ENCODE measurements at regions of chr20 and their contacts with region 1.

Region 1: DNA sequence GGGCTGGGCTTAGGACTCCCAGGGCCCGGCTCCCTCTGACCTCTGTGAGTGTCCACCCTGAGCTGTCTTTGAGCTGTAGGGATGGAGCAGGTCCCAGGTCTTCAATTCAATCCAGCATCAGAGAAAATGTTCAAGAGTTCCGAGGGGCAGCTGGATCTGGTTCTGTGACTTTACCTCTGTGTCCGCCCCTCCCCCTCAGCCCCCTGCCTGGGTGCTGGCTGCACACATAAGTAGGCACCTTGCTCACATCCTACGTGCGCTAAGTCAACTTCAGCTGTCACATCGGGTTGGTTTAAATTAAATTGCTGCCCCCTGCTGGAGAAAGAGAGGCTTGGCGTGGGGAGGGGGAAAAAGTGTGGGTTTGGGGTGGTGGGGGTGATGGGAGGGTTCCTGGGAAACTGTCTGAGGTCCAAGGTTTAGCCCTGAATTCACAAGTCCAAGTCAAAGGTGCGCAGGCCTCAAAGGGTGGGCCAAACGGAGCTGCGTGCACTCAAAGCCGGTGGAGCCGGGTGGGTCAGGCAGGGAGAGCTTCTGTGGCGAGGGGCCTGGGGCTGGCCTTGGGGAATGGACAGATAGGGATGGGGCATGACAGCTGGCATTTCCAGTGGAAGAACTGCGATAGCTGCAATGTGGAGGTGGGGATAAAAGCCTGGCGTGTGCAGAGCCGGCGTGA is 3.0 kb downstream of the WFDC5 start:
- DNase-seq: peak; percentile 37
- H3K4me3 Mint-ChIP-seq: no peak overlapping the region
- H3K27ac Mint-ChIP-seq: no peak overlapping the region
- H3K4me1 Mint-ChIP-seq: peaks cover 9% of the 10 kb centered on the region
- H3K27me3 Mint-ChIP-seq: no peaks in the 10 kb centered on the region

Region 2: GRCh38 chr20:45011108-45011526 is 100.8 kb before region 1 on chr20:
- CTCF ChIA-PET with region 1: interaction called, 25 read pairs
- POLR2A ChIA-PET with region 1: no interaction called
- intact Hi-C with region 1: no loop called
- DNase-seq: peak; percentile 55
- H3K4me3 Mint-ChIP-seq: no peak overlapping the region
- H3K27ac Mint-ChIP-seq: no peak overlapping the region
- H3K4me1 Mint-ChIP-seq: peaks cover 62% of the 10 kb centered on the region
- H3K27me3 Mint-ChIP-seq: no peaks in the 10 kb centered on the region

Region 3: DNA sequence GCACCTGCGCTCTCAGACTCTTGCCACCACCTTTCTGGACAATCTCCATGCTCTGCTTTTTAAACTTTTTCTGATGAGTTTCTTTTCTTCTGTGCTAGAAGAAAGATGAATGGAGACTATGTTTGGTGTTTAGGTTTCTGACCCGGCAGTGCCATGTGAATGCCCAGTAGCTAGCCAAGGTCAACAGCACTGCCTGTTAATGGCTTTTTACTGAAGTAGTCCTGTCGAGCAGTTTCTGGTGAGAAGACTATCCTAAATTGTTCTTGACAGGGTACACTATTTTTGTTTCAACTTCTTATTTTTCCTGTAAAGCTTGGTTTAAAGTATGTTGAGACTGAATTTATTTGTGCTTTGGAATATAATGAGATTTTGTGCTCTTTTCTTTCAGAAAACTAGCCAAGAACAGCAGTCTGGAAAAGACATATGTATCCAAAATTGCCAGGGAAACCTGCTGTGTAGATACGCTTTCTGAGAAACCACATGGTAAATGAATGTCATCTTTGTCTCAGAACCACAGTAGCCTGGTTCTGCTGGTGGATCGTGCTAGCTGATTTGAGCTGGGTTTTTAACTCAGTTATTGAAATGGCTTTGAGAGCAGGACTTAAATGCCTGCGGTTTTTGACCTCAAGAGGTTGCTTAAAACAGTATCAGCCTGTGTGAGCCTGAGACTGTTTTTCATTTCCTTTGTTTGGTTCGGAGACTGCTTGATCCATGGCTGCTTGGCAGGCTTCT is 59.1 kb before region 1 on chr20:
- CTCF ChIA-PET with region 1: interaction called, 15 read pairs
- POLR2A ChIA-PET with region 1: no interaction called
- intact Hi-C with region 1: no loop called
- DNase-seq: peak; percentile 41
- H3K4me3 Mint-ChIP-seq: no peak overlapping the region
- H3K27ac Mint-ChIP-seq: peak overlapping the region; percentile 74
- H3K4me1 Mint-ChIP-seq: peaks cover 77% of the 10 kb centered on the region
- H3K27me3 Mint-ChIP-seq: no peaks in the 10 kb centered on the region

Region 4: GRCh38 chr20:45138561-45139300 is 26.8 kb after region 1 on chr20:
- CTCF ChIA-PET with region 1: interaction called, 22 read pairs
- POLR2A ChIA-PET with region 1: no interaction called
- intact Hi-C with region 1: no loop called
- DNase-seq: peak; percentile 88
- H3K4me3 Mint-ChIP-seq: no peak overlapping the region
- H3K27ac Mint-ChIP-seq: no peak overlapping the region
- H3K4me1 Mint-ChIP-seq: no peaks in the 10 kb centered on the region
- H3K27me3 Mint-ChIP-seq: peaks cover 5% of the 10 kb centered on the region